Activated CD4-positive, alpha-beta T cell treated with anti-CD3 and anti-CD28 coated beads for 36 hours (primary cell): ENCODE measurements at regions of chr16 and their contacts with region 1.

Region 1: GRCh38 chr16:20910781-20911321 is 10.3 kb downstream of the LYRM1 start:
- DNase-seq: no peak
- ATAC-seq: peak; percentile 80
- H3K4me3 Mint-ChIP-seq: no peak overlapping the region
- H3K27ac Mint-ChIP-seq: peak overlapping the region; percentile 62
- H3K4me1 Mint-ChIP-seq: peaks cover 23% of the 10 kb centered on the region
- H3K27me3 Mint-ChIP-seq: no peaks in the 10 kb centered on the region

Region 2: GRCh38 chr16:20938426-20938825 is 27.6 kb after region 1 on chr16:
- CTCF ChIA-PET with region 1: no interaction called
- POLR2A ChIA-PET with region 1: interaction called, 10 read pairs
- intact Hi-C with region 1: loop called in 1 of 2 experiments (anchors 2 kb)
- DNase-seq: peak; percentile 48
- ATAC-seq: peak; percentile 89
- H3K4me3 Mint-ChIP-seq: no peak overlapping the region
- H3K27ac Mint-ChIP-seq: peak overlapping the region; percentile 72
- H3K4me1 Mint-ChIP-seq: peaks cover 36% of the 10 kb centered on the region
- H3K27me3 Mint-ChIP-seq: peaks cover 1% of the 10 kb centered on the region

Region 3: DNA sequence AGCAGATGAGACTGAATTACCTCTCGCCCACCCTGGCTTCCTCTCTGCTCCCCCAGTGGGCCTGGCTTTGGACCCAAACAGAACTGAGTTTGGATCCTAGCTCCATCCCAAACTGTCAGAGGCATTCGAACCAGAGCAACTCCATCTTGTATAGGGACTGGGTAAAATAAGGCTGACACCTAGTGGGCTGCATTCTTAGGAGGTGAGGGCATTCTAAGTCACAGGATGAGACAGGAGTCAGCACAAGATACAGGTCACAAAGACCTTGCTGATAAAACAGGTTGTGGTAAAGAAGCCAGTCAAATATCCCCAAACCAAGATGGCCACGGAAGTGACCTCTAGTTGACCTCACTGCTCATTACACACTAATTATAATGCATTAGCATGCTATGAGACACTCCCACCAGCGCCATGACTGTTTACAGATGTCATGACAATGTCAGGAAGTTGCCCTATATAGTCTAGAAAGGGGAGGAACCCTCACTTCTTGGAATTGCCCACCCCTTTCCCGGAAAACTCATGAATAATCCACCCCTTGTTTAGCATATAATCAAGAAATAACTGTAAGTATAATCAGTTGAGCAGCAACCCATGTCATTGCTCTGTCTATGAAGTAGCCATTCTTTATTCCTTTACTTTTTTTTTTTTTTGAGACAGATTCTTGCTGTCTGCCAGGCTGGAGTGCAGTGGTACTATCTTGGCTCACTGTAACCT is 34.2 kb after region 1 on chr16:
- CTCF ChIA-PET with region 1: interaction called, 3 read pairs
- POLR2A ChIA-PET with region 1: interaction called, 5 read pairs
- intact Hi-C with region 1: loop called in 1 of 2 experiments (anchors 2 kb)
- DNase-seq: peak; percentile 78
- ATAC-seq: peak; percentile 78
- H3K4me3 Mint-ChIP-seq: no peak overlapping the region
- H3K27ac Mint-ChIP-seq: peak overlapping the region; percentile 55
- H3K4me1 Mint-ChIP-seq: peaks cover 33% of the 10 kb centered on the region
- H3K27me3 Mint-ChIP-seq: no peaks in the 10 kb centered on the region